ENCODE measurements at regions of chr5 and their contacts with region 1.

Region 1: DNA sequence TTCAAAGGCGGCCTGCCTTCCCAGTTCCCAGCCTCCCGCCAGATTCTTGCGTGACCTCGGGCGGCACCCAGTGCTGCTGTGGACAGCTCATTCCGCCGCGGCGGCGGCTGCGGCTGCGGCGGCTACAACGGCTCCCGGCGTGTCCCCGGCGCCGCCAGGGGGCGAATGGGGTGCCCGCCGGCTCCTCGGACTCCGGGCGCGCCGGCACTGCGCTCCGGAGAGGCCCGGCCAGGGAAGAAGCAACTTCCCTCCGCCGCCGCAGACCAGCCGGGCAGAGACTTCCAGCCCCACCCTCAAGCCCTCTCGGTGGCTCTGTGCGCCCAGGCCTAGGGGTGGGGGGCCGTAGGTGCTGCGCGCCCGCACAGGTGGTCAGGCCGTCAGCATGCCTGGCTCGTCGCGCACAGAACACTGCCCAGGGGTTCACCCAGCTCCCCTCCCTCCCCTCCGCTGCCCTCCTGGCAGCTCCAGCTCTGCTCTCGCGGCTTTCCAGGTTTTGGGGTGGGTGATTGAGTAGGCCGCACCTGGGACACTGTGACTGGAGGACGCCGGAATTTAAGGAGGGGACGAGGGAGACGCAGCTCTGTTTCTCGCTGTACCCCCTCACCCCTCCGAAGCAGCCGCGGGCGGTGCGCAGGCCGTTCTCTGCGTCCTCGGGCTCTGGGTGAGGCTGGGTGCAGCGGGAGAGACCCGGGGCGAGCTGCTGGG is 20.2 kb downstream of the IGIP start:
- DNase-seq: peak; percentile 31 to 56 (median 39)
- H3K4me3 ChIP-seq: peak overlapping the region; percentile 32
- H3K4me3 Mint-ChIP-seq: peak overlapping the region in 5 of 7 donors; percentile 10 to 69 (median 48)
- H3K27ac ChIP-seq: no peak overlapping the region
- H3K27ac Mint-ChIP-seq: no peak overlapping the region
- H3K4me1 ChIP-seq: peaks cover 15% of the 10 kb centered on the region
- H3K4me1 Mint-ChIP-seq: peaks cover 17 to 32% (median 26%) of the 10 kb centered on the region in 3 donors
- H3K27me3 ChIP-seq: peaks cover 11% of the 10 kb centered on the region
- H3K27me3 Mint-ChIP-seq: peaks cover 12 to 17% of the 10 kb centered on the region in 2 donors

Region 2: GRCh38 chr5:140042643-140043500 is 103.1 kb before region 1 on chr5 and contains the start of gene NRG2:
- CTCF ChIA-PET with region 1: interaction called, 12 read pairs
- POLR2A ChIA-PET with region 1: no interaction called
- DNase-seq: peak; percentile 48 to 77 (median 52)
- H3K4me3 ChIP-seq: peak within 1 kb of the TSS; percentile 49
- H3K4me3 Mint-ChIP-seq: peak within 1 kb of the TSS; percentile 67 to 90 (median 74)
- H3K27ac ChIP-seq: no peak within 1 kb of the TSS
- H3K27ac Mint-ChIP-seq: peak within 1 kb of the TSS in 1 of 8 donors; percentile 51
- H3K4me1 ChIP-seq: peaks cover 13% of the 10 kb centered on the region
- H3K4me1 Mint-ChIP-seq: peaks cover 12 to 42% (median 33%) of the 10 kb centered on the region in 3 donors
- H3K27me3 ChIP-seq: peaks cover 41% of the 10 kb centered on the region
- H3K27me3 Mint-ChIP-seq: peaks cover 34 to 53% of the 10 kb centered on the region in 2 donors
- total RNA-seq, gene NRG2: 0.18 to 0.24 TPM

Region 3: DNA sequence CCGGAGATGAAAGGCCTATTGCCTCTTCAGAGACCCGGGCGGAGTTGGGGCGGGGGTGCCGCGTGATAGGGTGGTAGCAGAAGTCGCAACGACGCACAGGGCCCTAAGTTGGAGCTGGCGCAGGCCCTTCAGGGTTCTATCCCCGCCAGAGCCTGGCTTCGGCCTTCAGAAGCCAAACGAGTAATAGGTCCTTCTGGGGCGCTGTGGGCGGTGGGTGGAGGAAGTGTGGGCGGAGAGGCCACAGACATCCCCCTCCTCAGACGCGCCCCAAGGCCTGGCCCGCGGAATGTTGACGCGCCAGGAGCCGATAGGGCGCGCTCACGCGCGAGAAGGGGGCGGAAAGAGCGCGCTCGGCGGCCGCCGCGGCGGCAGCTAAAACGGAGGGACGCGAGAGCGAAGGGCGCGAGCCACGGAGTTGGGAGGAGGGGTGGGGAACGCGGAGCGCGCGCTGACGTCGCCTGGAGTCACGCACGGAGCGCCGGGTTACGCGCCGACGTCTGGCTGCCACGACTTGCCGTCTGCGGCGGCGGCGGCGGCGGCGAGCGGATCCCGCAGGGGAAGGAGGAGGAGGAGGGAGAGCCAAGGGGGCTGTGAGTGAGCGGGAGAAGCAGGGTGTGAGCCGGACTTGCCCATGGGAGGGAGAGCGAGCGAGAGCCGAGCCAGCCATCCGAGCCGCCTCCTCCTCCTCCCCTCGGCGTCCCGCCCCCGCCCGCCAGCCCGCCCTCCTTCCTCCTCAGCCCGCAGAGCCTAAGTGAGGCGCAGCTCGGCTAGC is 38.5 kb before region 1 on chr5:
- CTCF ChIA-PET with region 1: interaction called, 13 read pairs
- POLR2A ChIA-PET with region 1: interaction called, 12 read pairs
- DNase-seq: peak; percentile 90 to 96 (median 96)
- H3K4me3 ChIP-seq: peak overlapping the region; percentile 84
- H3K4me3 Mint-ChIP-seq: peak overlapping the region; percentile 88 to 97 (median 95)
- H3K27ac ChIP-seq: peak overlapping the region; percentile 93
- H3K27ac Mint-ChIP-seq: peak overlapping the region; percentile 96 to 100 (median 99)
- H3K4me1 ChIP-seq: peaks cover 38% of the 10 kb centered on the region
- H3K4me1 Mint-ChIP-seq: peaks cover 38 to 55% (median 42%) of the 10 kb centered on the region in 3 donors
- H3K27me3 ChIP-seq: no peaks in the 10 kb centered on the region
- H3K27me3 Mint-ChIP-seq: peaks cover 4 to 6% of the 10 kb centered on the region in 2 donors

Region 4: DNA sequence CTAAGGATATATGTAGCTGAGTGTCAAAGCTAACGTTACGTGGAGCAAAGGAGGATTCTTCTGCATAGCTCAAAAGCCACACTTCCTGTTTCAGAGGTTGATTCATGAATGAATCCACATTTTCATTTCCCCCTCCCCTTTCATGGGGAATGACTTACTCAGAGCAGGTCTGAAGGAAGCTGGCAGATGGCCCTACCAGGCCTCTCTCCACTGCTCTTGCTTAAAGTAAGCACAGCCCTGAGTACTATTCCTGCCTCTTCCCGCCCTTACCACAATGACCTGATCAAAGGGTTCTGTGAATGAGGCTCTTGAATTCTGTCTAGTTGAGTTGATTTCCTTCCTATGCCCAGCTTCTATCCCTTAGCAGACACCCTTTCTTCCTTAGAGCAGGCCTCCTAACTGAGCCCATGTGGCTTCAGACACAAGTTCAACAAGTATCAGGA is 14.0 kb before region 1 on chr5:
- CTCF ChIA-PET with region 1: interaction called, 54 read pairs
- POLR2A ChIA-PET with region 1: no interaction called
- DNase-seq: no peak
- H3K4me3 ChIP-seq: no peak overlapping the region
- H3K4me3 Mint-ChIP-seq: peak overlapping the region in 2 of 7 donors; percentile 8 to 26
- H3K27ac ChIP-seq: no peak overlapping the region
- H3K27ac Mint-ChIP-seq: peak overlapping the region in 5 of 8 donors; percentile 33 to 59 (median 45)
- H3K4me1 ChIP-seq: peaks cover 25% of the 10 kb centered on the region
- H3K4me1 Mint-ChIP-seq: peaks cover 37 to 59% (median 52%) of the 10 kb centered on the region in 3 donors
- H3K27me3 ChIP-seq: no peaks in the 10 kb centered on the region
- H3K27me3 Mint-ChIP-seq: no peaks in the 10 kb centered on the region

Region 5: DNA sequence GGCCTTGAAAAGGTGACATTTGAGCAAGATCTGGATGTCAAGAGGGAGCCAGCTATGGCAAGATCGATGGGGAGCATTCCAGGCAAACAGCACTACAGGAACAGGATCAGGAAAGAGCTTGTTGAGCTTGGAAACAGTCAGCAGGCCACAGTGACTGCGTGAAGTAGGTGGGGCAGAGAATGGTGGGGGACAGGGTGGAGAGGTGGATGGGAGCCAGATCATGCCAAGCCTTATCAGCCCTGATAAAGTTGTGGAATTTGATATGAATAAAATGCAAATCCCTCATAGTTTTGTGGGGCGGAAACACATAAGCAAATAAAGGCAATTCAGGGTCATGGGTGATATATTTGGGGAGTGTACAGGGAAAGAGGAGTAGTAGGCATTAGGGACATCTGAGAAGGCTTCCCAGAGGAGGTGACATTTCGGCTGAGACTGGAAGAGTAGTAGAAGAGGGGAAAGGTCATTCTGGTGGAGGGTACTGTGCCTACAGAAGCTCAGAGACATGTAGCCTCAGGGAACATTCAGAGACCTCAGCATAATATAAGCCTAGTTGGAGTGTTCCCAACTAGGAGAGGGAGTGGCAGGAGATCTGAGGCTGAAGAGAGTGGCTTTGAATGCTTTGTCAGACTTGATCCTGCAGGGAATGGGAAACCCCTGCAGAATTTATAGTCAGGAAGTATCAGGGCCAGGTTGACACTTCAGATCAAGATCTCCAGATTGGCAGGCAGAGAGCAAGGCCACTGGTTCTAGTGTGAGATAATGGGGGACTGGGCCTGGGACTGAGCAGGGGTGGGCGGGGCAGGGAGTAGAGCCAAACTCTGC is 19.3 kb after region 1 on chr5:
- CTCF ChIA-PET with region 1: interaction called, 83 read pairs
- POLR2A ChIA-PET with region 1: no interaction called
- DNase-seq: no peak
- H3K4me3 ChIP-seq: no peak overlapping the region
- H3K4me3 Mint-ChIP-seq: no peak overlapping the region
- H3K27ac ChIP-seq: no peak overlapping the region
- H3K27ac Mint-ChIP-seq: peak overlapping the region in 1 of 8 donors; percentile 68
- H3K4me1 ChIP-seq: no peaks in the 10 kb centered on the region
- H3K4me1 Mint-ChIP-seq: no peaks in the 10 kb centered on the region
- H3K27me3 ChIP-seq: no peaks in the 10 kb centered on the region
- H3K27me3 Mint-ChIP-seq: peaks cover 1 to 4% of the 10 kb centered on the region in 2 donors

Region 6: DNA sequence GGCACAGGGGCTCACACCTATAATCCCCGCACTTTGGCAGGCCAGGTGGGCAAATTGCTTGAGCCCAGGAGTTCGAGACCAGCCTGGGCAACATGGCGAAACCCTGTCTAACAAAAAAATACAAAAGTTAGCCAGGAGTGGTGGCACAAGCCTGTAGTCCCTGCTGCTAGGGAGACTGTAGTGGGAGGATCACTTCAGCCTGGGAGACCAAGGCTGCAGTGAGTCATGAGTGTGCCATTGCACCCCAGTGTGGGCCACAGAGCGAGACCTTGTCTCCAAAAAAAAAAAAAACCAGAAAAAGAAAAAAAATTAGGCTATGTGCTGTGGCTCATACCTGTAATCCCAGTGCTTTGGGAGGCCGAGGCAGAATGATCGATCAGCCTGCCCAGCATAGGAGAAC is 342.9 kb after region 1 on chr5:
- CTCF ChIA-PET with region 1: no interaction called
- POLR2A ChIA-PET with region 1: no interaction called
- DNase-seq: no peak
- H3K4me3 ChIP-seq: no peak overlapping the region
- H3K4me3 Mint-ChIP-seq: no peak overlapping the region
- H3K27ac ChIP-seq: no peak overlapping the region
- H3K27ac Mint-ChIP-seq: peak overlapping the region in 1 of 8 donors; percentile 29
- H3K4me1 ChIP-seq: no peaks in the 10 kb centered on the region
- H3K4me1 Mint-ChIP-seq: peaks cover 0 to 9% (median 5%) of the 10 kb centered on the region in 3 donors
- H3K27me3 ChIP-seq: no peaks in the 10 kb centered on the region
- H3K27me3 Mint-ChIP-seq: no peaks in the 10 kb centered on the region

Measured in CD8-positive, alpha-beta memory T cell (primary cell).